Dorsolateral prefrontal cortex (tissue), 120 donors: ENCODE measurements at regions of chr1 and their contacts with region 1.

Region 1: GRCh38 chr1:154961497-154962262 is at the start of gene PYGO2:
- DNase-seq: peak in 9 of 10 donors; percentile 62 to 87 (median 72)
- H3K4me3 ChIP-seq: peak within 1 kb of the TSS; percentile 66 to 99 (median 92)
- H3K27ac ChIP-seq: peak within 1 kb of the TSS; percentile 80 to 100 (median 99)
- H3K27me3 ChIP-seq: no peaks in the 10 kb centered on the region
- CTCF ChIP-seq: peak in 55 of 56 donors; percentile 20 to 93 (median 72)
- total RNA-seq, gene PYGO2: 26.9 to 46.0 (median 33.8) TPM

Region 2: DNA sequence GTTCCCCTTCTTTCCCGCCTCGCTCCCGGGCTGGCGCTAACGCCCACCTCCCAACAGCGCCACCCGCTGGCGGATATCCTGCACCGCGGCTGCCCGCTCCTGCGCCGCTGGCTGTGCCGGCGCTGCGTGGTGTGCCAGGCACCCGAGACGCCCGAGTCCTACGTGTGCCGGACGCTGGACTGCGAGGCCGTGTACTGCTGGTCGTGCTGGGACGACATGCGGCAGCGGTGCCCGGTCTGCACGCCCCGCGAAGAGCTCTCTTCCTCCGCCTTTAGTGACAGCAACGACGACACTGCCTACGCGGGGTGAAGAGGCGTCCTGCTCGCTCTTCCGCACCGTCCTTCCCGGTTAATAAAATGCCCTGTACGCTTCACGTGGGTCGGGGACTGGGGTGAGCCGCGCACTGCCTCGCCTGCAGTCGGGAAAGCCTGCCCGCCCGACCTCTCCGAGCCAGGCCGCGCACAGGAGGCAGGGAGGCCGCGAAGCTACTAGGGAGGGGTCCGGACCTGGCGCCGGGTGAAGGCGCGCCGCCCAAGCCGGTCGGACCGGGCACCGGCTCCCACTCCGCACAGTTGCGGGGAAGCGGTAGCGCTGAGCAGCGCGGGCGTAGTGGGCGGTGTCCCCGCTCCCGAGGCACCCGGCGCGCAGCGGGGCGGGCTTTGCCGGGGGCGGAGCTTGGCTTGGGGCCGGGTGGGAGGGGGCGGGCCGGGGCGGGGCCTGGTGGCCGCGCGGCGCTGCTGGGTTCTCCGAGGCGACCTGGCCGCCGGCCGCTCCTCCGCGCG is 89.1 kb after region 1 on chr1 and contains the start of gene ADAM15:
- intact Hi-C with region 1: loop called in 1 of 2 experiments (anchors 5 kb)
- DNase-seq: peak; percentile 58 to 88 (median 70)
- H3K4me3 ChIP-seq: peak within 1 kb of the TSS; percentile 53 to 96 (median 81)
- H3K27ac ChIP-seq: peak within 1 kb of the TSS; percentile 51 to 98 (median 89)
- H3K27me3 ChIP-seq: no peaks in the 10 kb centered on the region
- CTCF ChIP-seq: peak; percentile 54 to 94 (median 84)
- total RNA-seq, gene ADAM15: 32.1 to 108 (median 62.7) TPM